Left cardiac atrium (tissue), 4 donors: ENCODE measurements at regions of chr4 and their contacts with region 1.

Region 1: DNA sequence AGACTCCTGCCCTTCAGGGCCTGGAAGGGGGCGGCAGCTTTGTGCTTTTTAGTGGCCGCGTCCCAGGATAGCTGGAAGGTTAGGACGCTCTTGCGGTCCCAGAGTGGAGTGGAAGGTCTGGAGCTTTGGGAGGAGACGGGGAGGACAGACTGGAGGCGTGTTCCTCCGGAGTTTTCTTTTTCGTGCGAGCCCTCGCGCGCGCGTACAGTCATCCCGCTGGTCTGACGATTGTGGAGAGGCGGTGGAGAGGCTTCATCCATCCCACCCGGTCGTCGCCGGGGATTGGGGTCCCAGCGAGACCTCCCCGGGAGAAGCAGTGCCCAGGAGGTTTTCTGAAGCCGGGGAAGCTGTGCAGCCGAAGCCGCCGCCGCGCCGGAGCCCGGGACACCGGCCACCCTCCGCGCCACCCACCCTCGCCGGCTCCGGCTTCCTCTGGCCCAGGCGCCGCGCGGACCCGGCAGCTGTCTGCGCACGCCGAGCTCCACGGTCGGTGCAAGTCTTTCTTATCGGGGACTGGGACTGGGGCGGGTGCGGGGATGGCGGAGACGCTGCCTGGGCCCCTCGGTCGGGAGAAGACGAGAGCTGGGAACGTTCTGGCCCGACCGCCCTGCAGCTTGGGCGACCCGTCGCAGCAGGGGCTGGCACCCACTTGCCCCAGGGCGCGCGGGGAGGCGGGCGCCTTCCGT is at the start of gene EDNRA:
- DNase-seq: peak; percentile 48
- ATAC-seq: peak; percentile 79 to 88
- total RNA-seq, gene EDNRA: 29.2 to 76.3 TPM

Region 2: GRCh38 chr4:147160908-147161513 is 320.0 kb before region 1 on chr4:
- intact Hi-C with region 1: loop called in 1 of 2 experiments (anchors 5 kb)
- DNase-seq: no peak
- ATAC-seq: peak; percentile 48 to 69

Region 3: DNA sequence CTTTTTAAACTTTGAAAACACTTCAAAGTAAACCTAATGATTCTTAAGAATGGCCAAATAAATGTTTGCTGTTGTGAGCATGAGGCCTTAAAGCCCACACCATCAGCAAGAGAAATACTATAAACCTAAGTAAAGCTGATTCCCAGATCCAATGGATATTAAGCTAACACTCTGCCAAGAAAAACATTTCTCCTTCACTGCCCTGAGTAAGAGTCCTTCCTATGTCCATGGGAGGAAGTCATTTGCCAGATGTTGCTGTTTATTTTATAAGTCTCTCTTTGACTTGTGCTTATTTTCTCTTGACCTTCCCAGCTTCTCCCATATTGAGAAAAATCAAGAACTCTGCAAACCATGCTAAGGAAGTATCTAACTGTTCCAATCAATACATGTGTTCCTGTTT is 154.4 kb before region 1 on chr4:
- intact Hi-C with region 1: loop called in 1 of 2 experiments (anchors 5 kb)
- DNase-seq: no peak
- ATAC-seq: peak in 1 of 2 donors; percentile 62

Region 4: GRCh38 chr4:147361726-147362125 is 119.3 kb before region 1 on chr4:
- intact Hi-C with region 1: loop called in 1 of 2 experiments (anchors 10 kb)
- DNase-seq: peak; percentile 21
- ATAC-seq: peak; percentile 73 to 93

Region 5: DNA sequence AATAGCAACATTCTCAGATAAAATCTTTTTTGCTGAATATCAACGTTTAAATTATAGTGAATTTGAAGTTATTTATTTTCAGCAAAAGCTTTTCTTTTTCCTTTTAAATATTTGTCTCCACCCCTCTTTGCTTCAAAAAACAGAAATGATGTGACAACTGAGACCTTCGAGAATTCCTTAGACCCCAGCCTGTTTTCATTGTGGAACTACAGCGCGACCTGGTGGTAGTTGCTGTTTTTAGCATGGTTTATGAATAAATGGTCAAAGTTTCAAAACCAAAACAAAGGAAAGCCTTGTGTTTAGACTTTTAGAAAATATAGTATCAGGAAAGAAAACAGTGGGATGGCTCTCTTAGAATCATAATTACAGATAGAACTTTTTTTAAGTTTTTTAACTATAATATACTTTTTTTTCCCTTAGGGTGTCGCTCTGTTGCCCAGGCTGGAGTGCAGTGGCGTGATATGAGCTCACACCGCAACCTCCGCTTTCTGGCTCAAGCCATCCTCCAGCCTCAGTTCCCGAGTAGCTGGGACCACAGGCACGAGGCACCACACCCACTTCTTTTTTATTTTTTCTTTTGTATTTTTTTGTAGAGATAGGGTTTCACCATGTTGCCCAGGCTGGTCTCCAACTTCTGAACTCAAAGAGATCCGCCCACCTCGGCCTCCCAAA is 109.4 kb after region 1 on chr4:
- intact Hi-C with region 1: loop called in 1 of 2 experiments (anchors 5 kb)
- DNase-seq: peak; percentile 61
- ATAC-seq: peak; percentile 61 to 69